Prostate gland (tissue), 2 donors: ENCODE measurements at regions of chr5 and their contacts with region 1.

Region 1: GRCh38 chr5:159965031-159965837 is 43.7 kb upstream of the TTC1 start:
- DNase-seq: no peak
- H3K4me3 ChIP-seq: no peak overlapping the region
- H3K27ac ChIP-seq: no peak overlapping the region
- H3K4me1 ChIP-seq: no peaks in the 10 kb centered on the region
- H3K27me3 ChIP-seq: no peaks in the 10 kb centered on the region
- CTCF ChIP-seq: peak in 3 of 4 experiments; percentile 33 to 51 (median 48)
- POLR2A ChIP-seq: no peak

Region 2: GRCh38 chr5:159444441-159445082 is 520.7 kb before region 1 on chr5:
- intact Hi-C with region 1: loop called (anchors 5 kb)
- DNase-seq: peak; percentile 28
- H3K4me3 ChIP-seq: no peak overlapping the region
- H3K27ac ChIP-seq: no peak overlapping the region
- H3K4me1 ChIP-seq: no peaks in the 10 kb centered on the region
- H3K27me3 ChIP-seq: no peaks in the 10 kb centered on the region
- CTCF ChIP-seq: peak in 3 of 4 experiments; percentile 60 to 66 (median 62)
- POLR2A ChIP-seq: no peak

Region 3: DNA sequence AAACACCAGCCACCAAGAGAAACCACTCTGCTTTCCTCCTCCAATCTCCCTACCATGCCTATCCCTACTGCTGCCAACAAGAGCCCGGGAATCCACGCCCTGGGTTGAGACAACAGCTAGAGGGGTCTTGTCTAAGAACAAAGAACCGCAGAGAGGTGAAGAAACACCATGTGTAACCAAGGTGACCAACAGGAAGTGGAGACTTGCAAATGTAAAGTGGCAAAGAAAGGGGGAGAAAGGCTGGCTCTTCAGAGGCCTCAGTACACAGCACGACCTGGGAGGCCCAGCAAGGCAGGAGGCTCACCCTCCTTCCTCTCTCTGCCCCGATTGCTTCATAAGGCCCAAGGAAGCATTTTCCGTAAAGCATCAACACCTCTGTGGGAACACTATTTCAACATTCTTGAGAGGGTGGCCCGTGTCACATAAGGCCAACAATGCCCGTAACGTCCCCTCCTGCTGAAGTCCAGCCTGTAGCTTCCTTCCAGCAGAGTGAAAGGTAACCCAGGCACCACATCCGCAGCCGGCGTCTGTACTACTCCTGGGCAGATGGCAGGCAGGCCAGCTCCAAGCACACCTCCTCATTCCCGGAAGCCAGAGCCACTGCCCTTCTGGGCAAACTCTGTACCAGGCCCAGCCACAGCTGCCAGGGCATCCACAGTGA is 328.8 kb after region 1 on chr5:
- intact Hi-C with region 1: no loop called
- DNase-seq: no peak
- H3K4me3 ChIP-seq: no peak overlapping the region
- H3K27ac ChIP-seq: no peak overlapping the region
- H3K4me1 ChIP-seq: no peaks in the 10 kb centered on the region
- H3K27me3 ChIP-seq: no peaks in the 10 kb centered on the region
- CTCF ChIP-seq: no peak
- POLR2A ChIP-seq: no peak